B cell (primary cell): ENCODE measurements at regions of chr15 and their contacts with region 1.

Region 1: DNA sequence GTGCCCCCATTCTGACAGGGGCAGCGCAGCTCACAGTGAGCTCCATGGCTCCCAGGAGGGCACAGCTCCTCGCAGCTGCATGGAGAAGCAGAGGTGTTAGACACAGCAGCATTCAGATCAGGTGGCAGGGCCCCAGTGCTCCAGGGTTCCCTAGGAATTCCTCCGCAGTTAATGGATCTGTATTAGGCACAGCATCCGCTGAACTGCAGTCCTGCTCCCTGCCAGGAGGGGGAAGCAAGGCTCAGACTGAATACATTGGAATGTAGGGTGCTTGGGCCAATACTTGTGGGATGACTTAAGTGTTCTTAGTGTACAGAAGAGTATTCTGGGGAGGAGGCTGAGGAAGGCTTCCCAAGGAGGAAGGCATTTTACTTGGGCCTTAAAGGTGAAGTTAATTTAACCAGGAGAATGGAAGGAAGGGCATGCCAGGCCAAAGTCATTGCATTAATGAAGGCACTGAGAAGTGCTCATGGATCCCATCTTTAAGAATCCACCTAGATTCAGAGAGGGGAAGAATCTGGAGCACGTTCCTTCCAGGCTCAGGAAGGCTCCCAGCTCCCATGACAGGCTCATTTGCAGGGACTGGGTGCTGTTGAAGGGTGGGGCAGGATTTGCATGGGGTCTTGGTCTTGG is 111.6 kb downstream of the RAB11A start:
- DNase-seq: peak; percentile 21
- ATAC-seq: no peak
- H3K4me3 ChIP-seq: no peak overlapping the region
- H3K4me3 Mint-ChIP-seq: peak overlapping the region; percentile 83
- H3K27ac ChIP-seq: no peak overlapping the region
- H3K27ac Mint-ChIP-seq: no peak overlapping the region
- H3K4me1 ChIP-seq: peaks cover 6 to 15% of the 10 kb centered on the region in 2 donors
- H3K4me1 Mint-ChIP-seq: peaks cover 13% of the 10 kb centered on the region
- H3K27me3 ChIP-seq: peaks cover 0 to 27% (median 10%) of the 10 kb centered on the region in 4 experiments
- H3K27me3 Mint-ChIP-seq: peaks cover 21% of the 10 kb centered on the region
- CTCF ChIP-seq: peak; percentile 34

Region 2: DNA sequence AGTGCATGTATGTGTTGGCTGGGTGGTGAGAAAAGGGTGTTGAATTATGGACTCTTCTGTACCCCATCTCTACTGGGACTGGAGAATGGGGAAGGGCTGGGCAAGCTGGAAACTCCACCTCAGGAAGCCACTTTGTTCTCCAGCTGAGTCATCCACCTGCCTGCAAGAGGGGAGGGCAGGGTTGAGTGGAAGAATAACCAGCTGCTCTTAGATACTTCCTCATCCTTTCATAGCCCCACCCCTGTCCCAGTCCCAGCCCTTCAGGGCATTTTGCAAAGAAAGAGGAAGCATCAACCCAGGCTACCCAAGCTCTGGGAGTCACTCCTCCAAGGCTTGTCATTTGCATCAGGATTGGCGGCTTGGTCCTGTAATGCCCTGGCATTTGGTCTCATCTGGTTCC is 78.6 kb before region 1 on chr15:
- CTCF ChIA-PET with region 1: no interaction called
- POLR2A ChIA-PET with region 1: no interaction called
- intact Hi-C with region 1: loop called (anchors 1 kb)
- DNase-seq: peak; percentile 81
- ATAC-seq: peak; percentile 98
- H3K4me3 ChIP-seq: no peak overlapping the region
- H3K4me3 Mint-ChIP-seq: peak overlapping the region; percentile 41
- H3K27ac ChIP-seq: peak overlapping the region in 1 of 2 donors; percentile 32
- H3K27ac Mint-ChIP-seq: peak overlapping the region; percentile 68
- H3K4me1 ChIP-seq: peaks cover 22 to 37% of the 10 kb centered on the region in 2 donors
- H3K4me1 Mint-ChIP-seq: peaks cover 38% of the 10 kb centered on the region
- H3K27me3 ChIP-seq: no peaks in the 10 kb centered on the region
- H3K27me3 Mint-ChIP-seq: no peaks in the 10 kb centered on the region
- CTCF ChIP-seq: no peak

Region 3: DNA sequence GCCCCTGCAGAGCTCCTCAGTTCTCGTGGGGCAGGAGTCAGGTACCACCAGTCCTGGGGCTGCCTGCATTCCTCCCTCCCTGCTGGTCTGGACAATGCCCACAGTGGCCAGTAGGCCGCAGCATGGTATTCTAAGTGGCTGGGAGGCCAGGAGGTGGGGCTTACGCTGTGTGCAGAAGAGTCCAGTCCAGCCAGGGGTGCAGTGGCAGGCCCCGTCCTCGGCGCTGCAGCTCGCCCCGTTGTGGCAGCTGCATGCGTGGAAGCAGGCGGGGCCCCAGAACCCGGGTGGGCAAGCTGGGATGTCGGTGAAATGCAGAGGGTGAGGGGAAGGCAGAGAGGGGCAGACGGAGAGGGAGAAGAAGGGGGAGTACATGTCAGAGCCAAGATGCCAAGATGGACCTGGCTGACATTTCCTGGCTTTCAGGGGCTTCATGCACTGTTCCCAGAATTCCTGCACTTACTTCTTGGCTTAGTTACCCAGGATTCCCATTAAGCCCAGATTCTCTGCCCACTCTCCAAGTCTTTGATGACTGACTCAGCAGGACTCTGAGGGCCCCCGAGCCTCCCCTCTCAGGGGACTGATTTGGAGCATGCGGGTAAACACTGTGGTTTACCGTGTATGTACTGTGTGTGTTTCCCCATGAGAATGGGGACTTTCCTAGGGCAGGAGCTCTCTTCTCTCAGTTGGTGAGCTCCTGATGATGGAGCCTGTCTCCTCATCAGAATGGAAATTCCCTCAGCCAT is 64.1 kb before region 1 on chr15:
- CTCF ChIA-PET with region 1: no interaction called
- POLR2A ChIA-PET with region 1: no interaction called
- intact Hi-C with region 1: loop called (anchors 5 kb)
- DNase-seq: peak; percentile 86
- ATAC-seq: peak; percentile 89
- H3K4me3 ChIP-seq: peak overlapping the region in 1 of 5 experiments; percentile 17
- H3K4me3 Mint-ChIP-seq: peak overlapping the region; percentile 72
- H3K27ac ChIP-seq: peak overlapping the region in 1 of 2 donors; percentile 73
- H3K27ac Mint-ChIP-seq: peak overlapping the region; percentile 73
- H3K4me1 ChIP-seq: peaks cover 69 to 70% of the 10 kb centered on the region in 2 donors
- H3K4me1 Mint-ChIP-seq: peaks cover 70% of the 10 kb centered on the region
- H3K27me3 ChIP-seq: no peaks in the 10 kb centered on the region
- H3K27me3 Mint-ChIP-seq: no peaks in the 10 kb centered on the region
- CTCF ChIP-seq: no peak

Region 4: GRCh38 chr15:66097151-66098021 is 116.4 kb after region 1 on chr15:
- CTCF ChIA-PET with region 1: no interaction called
- POLR2A ChIA-PET with region 1: no interaction called
- intact Hi-C with region 1: no loop called
- DNase-seq: no peak
- ATAC-seq: no peak
- H3K4me3 ChIP-seq: no peak overlapping the region
- H3K4me3 Mint-ChIP-seq: no peak overlapping the region
- H3K27ac ChIP-seq: no peak overlapping the region
- H3K27ac Mint-ChIP-seq: no peak overlapping the region
- H3K4me1 ChIP-seq: no peaks in the 10 kb centered on the region
- H3K4me1 Mint-ChIP-seq: no peaks in the 10 kb centered on the region
- H3K27me3 ChIP-seq: no peaks in the 10 kb centered on the region
- H3K27me3 Mint-ChIP-seq: peaks cover 22% of the 10 kb centered on the region
- CTCF ChIP-seq: no peak